ENCODE measurements at regions of chr4 and their contacts with region 1.

Region 1: GRCh38 chr4:169010125-169011023 is at the start of gene CBR4:
- DNase-seq: peak; percentile 72 to 97
- ATAC-seq: peak; percentile 99
- H3K4me3 ChIP-seq: peak within 1 kb of the TSS; percentile 80
- H3K27ac ChIP-seq: peak within 1 kb of the TSS; percentile 93 to 95
- H3K4me1 ChIP-seq: peaks cover 40% of the 10 kb centered on the region; the same call in 2 of the 3 replicates
- CTCF ChIP-seq: no peak
- EP300 ChIP-seq: no peak
- POLR2A ChIP-seq: peak; percentile 80
- RAD21 ChIP-seq: no peak
- polyA plus RNA-seq, gene CBR4: 8.5 and 8.9 TPM in 2 replicates

Region 2: GRCh38 chr4:168440442-168441264 is 569.7 kb before region 1 on chr4:
- CTCF ChIA-PET with region 1: no interaction called
- POLR2A ChIA-PET with region 1: no interaction called
- DNase-seq: peak; percentile 77 to 87
- ATAC-seq: peak; percentile 98 to 99
- H3K4me3 ChIP-seq: no peak overlapping the region
- H3K27ac ChIP-seq: peak overlapping the region; percentile 81 to 90
- H3K4me1 ChIP-seq: peaks cover 28% of the 10 kb centered on the region
- CTCF ChIP-seq: no peak
- EP300 ChIP-seq: no peak; a peak in 1 of 5 replicates
- POLR2A ChIP-seq: no peak
- RAD21 ChIP-seq: peak; percentile 19 to 23; a peak in 2 of 5 replicates

Region 3: DNA sequence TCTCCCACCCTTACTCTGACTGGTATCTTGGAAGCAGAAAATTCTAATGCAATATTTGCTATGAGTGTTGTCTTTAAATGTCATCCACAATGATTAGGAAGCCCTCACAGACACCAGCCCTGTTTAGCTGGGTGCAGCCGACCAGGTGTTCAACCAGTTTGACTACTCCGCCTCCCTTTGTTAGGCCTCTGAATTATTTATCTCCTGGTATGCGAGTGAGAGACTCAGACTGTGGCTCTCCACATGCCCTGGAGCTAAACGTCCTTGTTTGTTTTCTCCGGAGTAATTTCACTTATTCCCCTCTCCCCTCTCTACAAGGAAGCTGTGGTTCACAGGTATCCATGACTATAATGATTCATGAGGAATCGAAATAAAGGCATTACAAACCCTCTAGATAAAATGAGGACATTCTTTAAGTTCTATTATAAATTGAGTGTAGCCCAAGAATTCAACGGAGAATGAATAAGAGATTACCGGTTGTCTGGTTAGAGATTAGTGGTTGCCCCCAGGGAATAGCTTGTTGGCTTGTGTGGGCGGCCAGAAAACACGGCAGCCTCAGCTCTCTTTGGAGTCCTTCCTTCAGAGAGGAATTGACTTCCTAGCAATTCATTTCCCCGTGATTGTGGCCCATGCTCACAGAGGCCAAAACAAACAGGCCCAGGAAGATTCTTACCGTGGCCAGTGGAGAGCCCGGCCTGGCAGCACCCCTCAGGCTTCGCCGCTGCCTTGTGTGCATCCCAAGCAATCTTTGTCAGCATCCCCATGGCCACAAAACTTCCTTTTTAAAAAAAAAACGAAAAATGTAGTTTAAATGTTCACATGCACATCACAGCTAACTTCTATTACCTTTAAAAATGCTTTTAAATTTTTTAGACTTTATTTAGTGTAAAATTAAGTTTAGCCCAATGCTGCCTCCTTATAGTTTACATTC is 59.9 kb after region 1 on chr4:
- CTCF ChIA-PET with region 1: no interaction called
- POLR2A ChIA-PET with region 1: interaction called, 12 read pairs
- DNase-seq: peak; percentile 46 to 74
- ATAC-seq: peak; percentile 78 to 83
- H3K4me3 ChIP-seq: peak overlapping the region; percentile 15; the same call in 1 of the 3 replicates
- H3K27ac ChIP-seq: peak overlapping the region; percentile 73 to 84
- H3K4me1 ChIP-seq: peaks cover 25% of the 10 kb centered on the region
- CTCF ChIP-seq: no peak
- EP300 ChIP-seq: no peak
- POLR2A ChIP-seq: no peak
- RAD21 ChIP-seq: no peak

Region 4: DNA sequence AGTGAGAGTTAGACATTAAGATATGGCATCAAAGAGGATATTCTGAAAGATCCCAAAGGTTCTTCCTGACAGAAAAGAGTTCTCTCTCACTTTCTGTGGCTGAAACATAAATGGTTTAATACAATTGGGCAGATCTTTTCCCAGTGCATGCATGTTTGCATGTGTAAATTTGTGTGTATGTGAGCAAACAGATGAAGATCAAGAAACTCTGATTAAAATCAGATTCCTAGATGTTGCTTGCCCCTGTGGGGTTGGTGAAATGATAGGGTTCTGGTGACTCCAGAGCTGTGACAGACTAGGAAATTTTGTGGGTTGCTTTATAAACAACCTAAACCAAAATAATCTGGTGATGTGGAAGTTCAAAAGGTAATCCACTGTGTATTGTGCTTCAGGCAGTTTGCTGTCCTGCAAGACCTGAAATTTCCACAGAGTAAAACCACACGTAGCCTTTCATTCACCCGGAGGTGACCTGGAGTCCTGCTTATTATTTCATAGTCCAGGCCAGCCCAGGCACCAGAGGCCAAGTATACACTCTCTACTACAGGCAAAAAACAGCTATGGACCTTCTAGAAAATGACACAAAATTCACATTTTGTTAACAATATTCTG is 114.2 kb after region 1 on chr4:
- CTCF ChIA-PET with region 1: no interaction called
- POLR2A ChIA-PET with region 1: no interaction called
- DNase-seq: no peak
- ATAC-seq: no peak
- H3K4me3 ChIP-seq: no peak overlapping the region
- H3K27ac ChIP-seq: no peak overlapping the region
- H3K4me1 ChIP-seq: no peaks in the 10 kb centered on the region
- CTCF ChIP-seq: no peak
- EP300 ChIP-seq: no peak
- POLR2A ChIP-seq: no peak
- RAD21 ChIP-seq: no peak

Region 5: GRCh38 chr4:169249214-169249973 is 239.0 kb after region 1 on chr4:
- CTCF ChIA-PET with region 1: no interaction called
- POLR2A ChIA-PET with region 1: interaction called, 11 read pairs
- DNase-seq: peak; percentile 30 to 88
- ATAC-seq: peak; percentile 90 to 95
- H3K4me3 ChIP-seq: peak overlapping the region; percentile 26; the same call in 1 of the 3 replicates
- H3K27ac ChIP-seq: peak overlapping the region; percentile 97 to 98
- H3K4me1 ChIP-seq: peaks cover 89% of the 10 kb centered on the region
- CTCF ChIP-seq: no peak
- EP300 ChIP-seq: peak; percentile 67 to 80; a peak in 3 of 5 replicates
- POLR2A ChIP-seq: no peak
- RAD21 ChIP-seq: peak in 1 of 2 experiments; percentile 26; a peak in 2 of 5 replicates

Region 6: GRCh38 chr4:169485791-169486742 is 475.7 kb after region 1 on chr4:
- CTCF ChIA-PET with region 1: interaction called, 11 read pairs
- POLR2A ChIA-PET with region 1: interaction called, 7 read pairs
- DNase-seq: peak; percentile 13 to 47
- ATAC-seq: peak in 1 of 2 experiments; percentile 69; a peak in 2 of 6 replicates
- H3K4me3 ChIP-seq: no peak overlapping the region
- H3K27ac ChIP-seq: peak overlapping the region in 1 of 2 experiments; percentile 45; a peak in 1 of 6 replicates
- H3K4me1 ChIP-seq: no peaks in the 10 kb centered on the region
- CTCF ChIP-seq: peak; percentile 74
- EP300 ChIP-seq: no peak
- POLR2A ChIP-seq: no peak
- RAD21 ChIP-seq: peak; percentile 85 to 89